MCF 10A (cell line): ENCODE measurements at regions of chr17 and their contacts with region 1.

Region 1: GRCh38 chr17:73371285-73371684 is 59.5 kb upstream of the CDC42EP4 start:
- DNase-seq: peak; percentile 48
- H3K4me3 Mint-ChIP-seq: no peak overlapping the region
- H3K27ac Mint-ChIP-seq: no peak overlapping the region
- H3K4me1 Mint-ChIP-seq: peaks cover 8% of the 10 kb centered on the region
- H3K27me3 Mint-ChIP-seq: peaks cover 53% of the 10 kb centered on the region
- CTCF ChIP-seq: no peak

Region 2: GRCh38 chr17:73039282-73039681 is 332.0 kb before region 1 on chr17:
- CTCF ChIA-PET with region 1: no interaction called
- POLR2A ChIA-PET with region 1: no interaction called
- intact Hi-C with region 1: no loop called
- DNase-seq: no peak
- H3K4me3 Mint-ChIP-seq: no peak overlapping the region
- H3K27ac Mint-ChIP-seq: no peak overlapping the region
- H3K4me1 Mint-ChIP-seq: no peaks in the 10 kb centered on the region
- H3K27me3 Mint-ChIP-seq: no peaks in the 10 kb centered on the region
- CTCF ChIP-seq: no peak

Region 3: DNA sequence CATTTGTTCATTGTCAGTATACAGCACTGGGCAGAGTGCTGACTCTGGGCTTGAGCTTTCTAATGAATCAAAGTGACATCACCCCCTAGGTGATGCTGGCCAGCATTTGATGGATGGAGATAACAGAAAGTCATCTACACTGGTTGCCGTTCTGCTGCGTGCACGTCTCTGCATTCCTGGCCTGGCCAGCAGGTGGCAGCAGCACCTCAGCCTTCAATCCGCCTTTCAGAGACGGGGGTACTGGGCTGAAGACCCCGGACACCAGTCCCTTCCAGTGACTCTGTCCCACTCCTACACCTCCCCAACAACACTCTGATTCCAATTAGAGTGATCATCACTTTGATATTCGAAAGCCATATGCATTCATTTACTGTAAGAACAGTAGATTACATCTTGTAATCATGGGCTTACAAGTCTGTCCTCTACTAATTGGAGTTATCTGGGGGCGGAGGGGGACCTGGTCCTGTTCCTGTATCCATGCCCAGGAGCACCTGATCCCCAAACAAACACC is 115.6 kb before region 1 on chr17:
- CTCF ChIA-PET with region 1: interaction called, 301 read pairs
- POLR2A ChIA-PET with region 1: interaction called, 17 read pairs
- intact Hi-C with region 1: loop called (anchors 1 kb)
- DNase-seq: peak; percentile 43
- H3K4me3 Mint-ChIP-seq: no peak overlapping the region
- H3K27ac Mint-ChIP-seq: no peak overlapping the region
- H3K4me1 Mint-ChIP-seq: no peaks in the 10 kb centered on the region
- H3K27me3 Mint-ChIP-seq: no peaks in the 10 kb centered on the region
- CTCF ChIP-seq: peak; percentile 98

Region 4: GRCh38 chr17:73271072-73271471 is 100.2 kb before region 1 on chr17:
- CTCF ChIA-PET with region 1: interaction called, 15 read pairs
- POLR2A ChIA-PET with region 1: interaction called, 3 read pairs
- intact Hi-C with region 1: no loop called
- DNase-seq: peak; percentile 52
- H3K4me3 Mint-ChIP-seq: no peak overlapping the region
- H3K27ac Mint-ChIP-seq: no peak overlapping the region
- H3K4me1 Mint-ChIP-seq: no peaks in the 10 kb centered on the region
- H3K27me3 Mint-ChIP-seq: no peaks in the 10 kb centered on the region
- CTCF ChIP-seq: no peak

Region 5: DNA sequence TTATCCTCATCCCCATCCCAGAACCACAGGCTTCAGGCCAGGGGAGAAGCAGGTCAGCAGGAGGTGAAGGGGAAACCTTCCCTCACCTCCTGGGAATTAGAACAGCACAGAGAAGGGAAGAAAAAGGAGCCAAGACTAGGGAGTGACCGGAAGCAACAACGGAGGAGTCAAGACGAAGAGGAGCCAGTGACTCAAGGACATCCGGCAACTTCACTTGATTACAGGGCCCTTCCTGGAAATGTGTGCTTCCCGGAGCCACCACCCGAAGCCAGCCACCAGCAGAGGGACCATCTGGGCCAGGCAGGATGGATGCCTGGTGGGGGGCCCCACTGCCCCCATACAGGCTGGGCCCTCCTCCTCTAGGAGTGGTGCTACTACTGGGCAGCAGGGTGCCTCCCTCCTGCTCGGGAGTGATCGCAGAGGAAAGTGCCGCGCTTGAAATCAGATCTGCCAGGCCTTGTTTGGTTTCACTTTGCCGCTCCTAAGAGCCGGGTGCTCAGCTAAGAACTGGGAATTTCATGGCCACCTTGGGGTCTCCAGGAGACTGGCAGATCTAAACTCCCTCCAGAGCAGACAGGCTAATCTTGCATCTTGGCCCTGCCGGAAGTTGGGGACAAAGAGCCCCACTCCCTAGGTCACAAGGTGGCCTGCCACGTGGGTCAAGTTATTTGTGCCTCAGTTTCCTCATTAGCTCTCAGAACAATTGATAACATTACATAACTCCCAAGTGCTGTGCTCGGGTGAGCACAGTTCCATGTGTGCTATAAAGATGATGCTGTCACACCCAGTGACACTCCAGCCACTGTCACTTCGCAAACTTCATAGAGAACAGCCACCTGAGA is 66.1 kb before region 1 on chr17:
- CTCF ChIA-PET with region 1: interaction called, 10 read pairs
- POLR2A ChIA-PET with region 1: interaction called, 3 read pairs
- intact Hi-C with region 1: no loop called
- DNase-seq: peak; percentile 84
- H3K4me3 Mint-ChIP-seq: peak overlapping the region; percentile 61
- H3K27ac Mint-ChIP-seq: peak overlapping the region; percentile 77
- H3K4me1 Mint-ChIP-seq: peaks cover 46% of the 10 kb centered on the region
- H3K27me3 Mint-ChIP-seq: no peaks in the 10 kb centered on the region
- CTCF ChIP-seq: no peak

Region 6: GRCh38 chr17:73342050-73342522 is 29.2 kb before region 1 on chr17:
- CTCF ChIA-PET with region 1: interaction called, 6 read pairs
- POLR2A ChIA-PET with region 1: no interaction called
- intact Hi-C with region 1: loop called (anchors 2 kb)
- DNase-seq: peak; percentile 93
- H3K4me3 Mint-ChIP-seq: peak overlapping the region; percentile 8
- H3K27ac Mint-ChIP-seq: peak overlapping the region; percentile 54
- H3K4me1 Mint-ChIP-seq: peaks cover 25% of the 10 kb centered on the region
- H3K27me3 Mint-ChIP-seq: no peaks in the 10 kb centered on the region
- CTCF ChIP-seq: no peak

Region 7: DNA sequence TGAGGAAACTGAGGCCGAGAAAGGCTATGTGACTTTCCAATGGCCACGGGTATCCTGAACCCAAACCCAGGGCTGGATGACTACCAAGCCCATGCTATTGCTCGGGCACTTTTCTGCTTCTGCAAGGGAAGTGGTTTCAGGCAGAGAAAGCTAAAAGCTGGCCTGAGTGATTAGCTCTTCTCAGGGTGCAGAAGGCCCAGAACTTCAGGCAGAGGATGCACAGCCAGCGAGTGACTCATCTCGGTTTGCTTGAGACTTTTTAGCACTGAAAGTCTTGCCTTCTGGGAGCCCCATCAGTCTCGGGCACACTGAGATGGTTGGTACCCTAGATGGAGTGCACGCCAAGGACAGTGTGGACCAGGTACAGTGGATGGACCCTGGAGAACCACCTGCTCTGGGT is 402.4 kb after region 1 on chr17:
- CTCF ChIA-PET with region 1: no interaction called
- POLR2A ChIA-PET with region 1: no interaction called
- intact Hi-C with region 1: no loop called
- DNase-seq: no peak
- H3K4me3 Mint-ChIP-seq: no peak overlapping the region
- H3K27ac Mint-ChIP-seq: no peak overlapping the region
- H3K4me1 Mint-ChIP-seq: peaks cover 15% of the 10 kb centered on the region
- H3K27me3 Mint-ChIP-seq: peaks cover 80% of the 10 kb centered on the region
- CTCF ChIP-seq: no peak